ENCODE measurements at regions of chr3 and their contacts with region 1.

Region 1: DNA sequence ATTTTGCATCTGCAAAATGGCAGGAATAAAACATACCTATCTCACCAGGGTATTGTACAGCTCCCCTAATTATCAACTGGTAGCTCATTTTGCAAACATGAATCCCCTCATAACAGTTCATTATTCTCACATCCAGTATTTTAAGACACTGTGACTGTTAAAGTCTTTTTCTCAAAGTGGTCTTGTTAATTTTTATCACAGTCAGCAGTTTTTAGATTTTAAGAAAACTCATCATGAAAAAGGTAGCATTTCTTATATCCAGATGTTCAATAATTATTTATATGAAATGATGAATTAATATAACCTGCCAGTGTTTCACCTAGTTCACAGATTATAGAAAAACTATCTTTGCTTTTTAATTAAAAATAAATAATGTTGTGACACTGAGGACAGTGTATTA is 354.9 kb upstream of the ARL6 start:
- DNase-seq: no peak
- ATAC-seq: no peak
- H3K4me3 Mint-ChIP-seq: no peak overlapping the region
- H3K27ac Mint-ChIP-seq: no peak overlapping the region
- H3K4me1 Mint-ChIP-seq: no peaks in the 10 kb centered on the region
- H3K27me3 Mint-ChIP-seq: no peaks in the 10 kb centered on the region
- CTCF ChIP-seq: no peak

Region 2: GRCh38 chr3:97479740-97480139 is 70.1 kb after region 1 on chr3:
- CTCF ChIA-PET with region 1: no interaction called
- POLR2A ChIA-PET with region 1: no interaction called
- intact Hi-C with region 1: loop called (anchors 10 kb)
- DNase-seq: no peak
- ATAC-seq: no peak
- H3K4me3 Mint-ChIP-seq: no peak overlapping the region
- H3K27ac Mint-ChIP-seq: no peak overlapping the region
- H3K4me1 Mint-ChIP-seq: no peaks in the 10 kb centered on the region
- H3K27me3 Mint-ChIP-seq: no peaks in the 10 kb centered on the region
- CTCF ChIP-seq: no peak

Region 3: DNA sequence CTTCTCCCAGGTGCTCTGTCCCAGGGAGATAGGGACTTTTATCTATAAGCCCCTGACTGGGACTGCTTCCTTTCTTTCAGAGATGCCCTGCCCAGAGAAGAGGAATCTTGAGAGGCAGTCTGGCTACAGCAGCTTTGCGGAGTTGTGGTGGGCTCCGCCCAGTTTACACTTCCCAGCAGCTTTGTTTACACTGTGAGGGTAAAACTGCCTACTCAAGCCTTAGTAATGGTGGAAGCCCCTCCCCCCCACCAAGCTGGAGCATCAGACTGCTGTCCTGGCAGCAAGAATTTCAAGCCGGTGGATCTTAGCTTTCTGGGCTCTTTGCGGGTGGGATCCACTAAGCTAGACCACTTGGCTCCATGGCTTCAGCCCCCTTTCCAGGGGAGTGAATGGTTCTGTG is 101.2 kb after region 1 on chr3:
- CTCF ChIA-PET with region 1: no interaction called
- POLR2A ChIA-PET with region 1: no interaction called
- intact Hi-C with region 1: no loop called
- DNase-seq: no peak
- ATAC-seq: no peak
- H3K4me3 Mint-ChIP-seq: no peak overlapping the region
- H3K27ac Mint-ChIP-seq: no peak overlapping the region
- H3K4me1 Mint-ChIP-seq: no peaks in the 10 kb centered on the region
- H3K27me3 Mint-ChIP-seq: no peaks in the 10 kb centered on the region
- CTCF ChIP-seq: no peak

Measured in activated B cell treated with CpG ODN at 0.5 μM for 24 hours (primary cell).